ENCODE measurements at regions of chr4 and their contacts with region 1.

Region 1: GRCh38 chr4:169659716-169660670 is 39.6 kb downstream of the CLCN3 start:
- DNase-seq: peak; percentile 97
- H3K4me3 Mint-ChIP-seq: peak overlapping the region; percentile 87
- H3K27ac Mint-ChIP-seq: peak overlapping the region; percentile 95
- H3K4me1 Mint-ChIP-seq: peaks cover 18% of the 10 kb centered on the region
- H3K27me3 Mint-ChIP-seq: no peaks in the 10 kb centered on the region
- CTCF ChIP-seq: no peak

Region 2: GRCh38 chr4:169593050-169593560 is 66.9 kb before region 1 on chr4:
- CTCF ChIA-PET with region 1: no interaction called
- POLR2A ChIA-PET with region 1: no interaction called
- intact Hi-C with region 1: no loop called
- DNase-seq: no peak
- H3K4me3 Mint-ChIP-seq: no peak overlapping the region
- H3K27ac Mint-ChIP-seq: no peak overlapping the region
- H3K4me1 Mint-ChIP-seq: no peaks in the 10 kb centered on the region
- H3K27me3 Mint-ChIP-seq: no peaks in the 10 kb centered on the region
- CTCF ChIP-seq: no peak

Region 3: GRCh38 chr4:169612871-169613859 is 46.8 kb before region 1 on chr4:
- CTCF ChIA-PET with region 1: interaction called, 14 read pairs
- POLR2A ChIA-PET with region 1: interaction called, 303 read pairs
- intact Hi-C with region 1: loop called (anchors 2 kb)
- DNase-seq: peak; percentile 81
- H3K4me3 Mint-ChIP-seq: peak overlapping the region; percentile 98
- H3K27ac Mint-ChIP-seq: peak overlapping the region; percentile 98
- H3K4me1 Mint-ChIP-seq: peaks cover 12% of the 10 kb centered on the region
- H3K27me3 Mint-ChIP-seq: no peaks in the 10 kb centered on the region
- CTCF ChIP-seq: peak; percentile 56

Region 4: DNA sequence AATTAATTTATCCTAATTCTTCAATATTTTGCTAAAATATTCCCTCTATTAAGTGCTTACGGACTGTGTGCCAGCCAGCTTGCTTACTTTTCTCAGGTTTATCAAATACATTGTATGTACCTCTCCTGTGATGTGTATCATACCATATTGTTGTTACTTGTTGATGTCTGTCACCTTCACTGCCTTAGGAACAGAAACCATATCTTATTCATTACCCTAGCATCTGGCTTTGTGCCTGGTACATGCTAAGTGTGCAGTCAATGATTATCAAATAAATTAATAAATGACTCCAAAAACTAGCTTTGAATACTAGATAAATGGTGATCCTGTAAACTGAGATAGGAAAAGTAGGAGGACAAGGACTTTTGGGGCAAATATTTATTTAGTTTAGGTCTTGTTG is 32.7 kb before region 1 on chr4:
- CTCF ChIA-PET with region 1: interaction called, 4 read pairs
- POLR2A ChIA-PET with region 1: interaction called, 303 read pairs
- intact Hi-C with region 1: no loop called
- DNase-seq: no peak
- H3K4me3 Mint-ChIP-seq: no peak overlapping the region
- H3K27ac Mint-ChIP-seq: no peak overlapping the region
- H3K4me1 Mint-ChIP-seq: peaks cover 25% of the 10 kb centered on the region
- H3K27me3 Mint-ChIP-seq: no peaks in the 10 kb centered on the region
- CTCF ChIP-seq: no peak

Region 5: GRCh38 chr4:169675825-169676224 is 15.8 kb after region 1 on chr4:
- CTCF ChIA-PET with region 1: interaction called, 3 read pairs
- POLR2A ChIA-PET with region 1: interaction called, 13 read pairs
- intact Hi-C with region 1: no loop called
- DNase-seq: no peak
- H3K4me3 Mint-ChIP-seq: no peak overlapping the region
- H3K27ac Mint-ChIP-seq: no peak overlapping the region
- H3K4me1 Mint-ChIP-seq: no peaks in the 10 kb centered on the region
- H3K27me3 Mint-ChIP-seq: no peaks in the 10 kb centered on the region
- CTCF ChIP-seq: no peak

Region 6: DNA sequence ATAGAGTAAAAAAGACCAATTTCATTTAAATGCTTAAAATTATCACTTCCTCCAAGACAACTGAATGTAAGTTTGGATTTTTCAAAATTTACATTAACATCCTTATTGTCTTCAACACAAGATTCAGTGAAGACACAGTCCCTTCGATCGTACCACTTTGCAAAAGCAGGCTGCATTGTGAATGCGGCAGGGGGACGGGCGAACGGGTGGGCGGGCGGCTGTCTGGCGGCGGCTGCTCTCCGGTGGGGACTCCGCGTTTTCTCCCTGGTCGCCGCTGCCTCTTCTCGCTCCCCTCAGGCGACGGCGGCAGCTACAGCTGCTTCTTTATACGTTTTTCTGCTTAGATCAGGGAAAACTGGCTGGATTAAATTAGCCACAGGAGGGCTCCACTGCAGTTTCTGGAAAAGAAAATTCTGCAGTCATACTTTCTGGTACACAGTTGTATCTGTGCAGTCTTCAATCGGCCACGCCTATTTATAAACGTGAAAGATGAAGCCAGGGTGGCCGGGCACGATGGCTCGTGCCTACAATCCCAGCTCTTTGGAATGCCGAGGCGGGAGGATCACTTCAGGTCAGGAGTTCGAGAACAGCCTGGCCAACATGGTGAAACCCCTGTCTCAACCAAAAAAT is 131.6 kb after region 1 on chr4:
- CTCF ChIA-PET with region 1: no interaction called
- POLR2A ChIA-PET with region 1: no interaction called
- intact Hi-C with region 1: loop called (anchors 1 kb)
- DNase-seq: peak; percentile 65
- H3K4me3 Mint-ChIP-seq: peak overlapping the region; percentile 1
- H3K27ac Mint-ChIP-seq: peak overlapping the region; percentile 10
- H3K4me1 Mint-ChIP-seq: peaks cover 27% of the 10 kb centered on the region
- H3K27me3 Mint-ChIP-seq: peaks cover 31% of the 10 kb centered on the region
- CTCF ChIP-seq: peak; percentile 41